HepG2 (cell line): ENCODE measurements at regions of chr18 and their contacts with region 1.

Region 1: DNA sequence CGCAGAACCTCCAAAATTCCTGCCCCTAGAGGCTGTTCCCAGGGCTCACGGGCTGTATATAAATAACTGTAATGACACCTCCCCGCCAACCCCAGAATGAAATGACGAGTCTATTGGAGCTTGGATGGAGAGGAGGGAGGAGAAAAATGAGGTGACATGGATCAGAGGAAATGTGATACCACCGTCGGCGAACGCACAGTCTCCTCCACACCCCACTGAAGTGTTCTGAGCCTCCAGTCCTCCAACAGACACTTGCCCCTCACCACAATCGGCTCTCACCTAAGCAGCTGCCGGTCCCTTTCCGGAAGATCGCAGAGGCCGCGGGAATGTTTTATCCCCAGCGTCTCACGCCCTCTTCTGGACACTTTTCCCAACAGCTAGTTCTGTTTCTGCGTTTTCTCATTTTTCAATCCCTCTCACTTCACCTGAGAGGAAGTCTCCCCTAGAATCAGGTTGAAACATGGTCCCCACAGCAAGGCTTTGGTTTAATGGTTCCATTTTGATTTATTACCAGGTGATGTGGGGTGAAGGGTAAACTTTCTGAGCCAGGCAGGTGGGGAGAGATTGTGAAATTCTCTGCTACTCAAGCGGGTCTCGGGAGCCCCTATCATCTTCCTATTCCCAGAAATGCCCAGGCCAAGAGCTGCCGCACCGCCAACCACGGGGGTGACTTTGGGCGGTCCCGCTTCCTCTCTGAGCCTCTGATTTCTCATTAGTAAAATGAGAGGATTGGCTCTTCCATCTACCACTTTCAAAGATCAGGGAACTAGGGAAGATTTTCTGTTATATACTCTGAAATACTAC is 9.1 kb upstream of the MYO5B start:
- DNase-seq: peak; percentile 46
- ATAC-seq: peak; percentile 86
- H3K4me3 ChIP-seq: peak overlapping the region in 1 of 3 experiments; percentile 56; a peak in 2 of 6 replicates
- H3K27ac ChIP-seq: no peak overlapping the region
- H3K4me1 ChIP-seq: peaks cover 32% of the 10 kb centered on the region
- H3K27me3 ChIP-seq: peaks cover 0 to 17% of the 10 kb centered on the region in 2 experiments; a peak in 3 of 5 replicates
- CTCF ChIP-seq: peak; percentile 90
- EP300 ChIP-seq: no peak
- POLR2A ChIP-seq: no peak
- RAD21 ChIP-seq: peak; percentile 79

Region 2: GRCh38 chr18:49899657-49900330 is 304.2 kb before region 1 on chr18:
- CTCF ChIA-PET with region 1: no interaction called
- POLR2A ChIA-PET with region 1: no interaction called
- in situ Hi-C with region 1: no loop called
- intact Hi-C with region 1: loop called (anchors 2 kb)
- DNase-seq: peak; percentile 27
- ATAC-seq: peak; percentile 92
- H3K4me3 ChIP-seq: no peak overlapping the region
- H3K27ac ChIP-seq: no peak overlapping the region
- H3K4me1 ChIP-seq: no peaks in the 10 kb centered on the region
- H3K27me3 ChIP-seq: no peaks in the 10 kb centered on the region
- CTCF ChIP-seq: peak; percentile 47
- EP300 ChIP-seq: no peak
- POLR2A ChIP-seq: no peak
- RAD21 ChIP-seq: peak; percentile 30; the same call in 1 of the 2 replicates

Region 3: DNA sequence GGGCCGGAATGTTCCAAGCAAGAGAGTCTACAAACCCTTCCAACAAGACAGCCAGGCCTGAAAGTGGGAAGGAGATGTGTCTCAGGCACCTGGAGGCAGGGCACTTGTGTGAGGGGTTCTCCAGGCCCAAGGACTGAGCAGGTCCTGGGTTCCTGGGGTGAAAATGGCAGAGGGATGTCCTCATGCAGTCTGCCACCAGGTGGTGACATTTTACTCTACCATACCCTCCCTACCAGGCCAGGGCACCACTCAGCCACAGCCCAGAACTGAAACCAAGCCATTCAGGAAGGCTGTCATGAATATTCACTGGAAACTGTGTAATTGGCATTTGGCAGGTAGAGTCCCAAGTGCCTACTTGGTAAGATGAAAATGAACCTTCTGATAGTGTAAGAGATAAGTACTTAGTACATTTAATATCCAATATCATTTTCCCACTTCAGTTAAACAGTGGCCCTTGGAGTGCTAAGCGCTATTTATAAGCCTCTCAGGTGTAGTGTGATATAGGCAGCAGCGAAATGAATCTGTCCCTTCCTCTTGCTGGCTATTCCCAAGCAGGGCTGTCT is 194.1 kb before region 1 on chr18:
- CTCF ChIA-PET with region 1: interaction called, 15 read pairs
- POLR2A ChIA-PET with region 1: no interaction called
- in situ Hi-C with region 1: no loop called
- intact Hi-C with region 1: loop called (anchors 2 kb)
- DNase-seq: peak; percentile 49
- ATAC-seq: peak; percentile 98
- H3K4me3 ChIP-seq: no peak overlapping the region
- H3K27ac ChIP-seq: no peak overlapping the region
- H3K4me1 ChIP-seq: peaks cover 13% of the 10 kb centered on the region; the same call in 1 of the 2 replicates
- H3K27me3 ChIP-seq: no peaks in the 10 kb centered on the region
- CTCF ChIP-seq: peak; percentile 80
- EP300 ChIP-seq: no peak
- POLR2A ChIP-seq: no peak
- RAD21 ChIP-seq: peak; percentile 48; the same call in 1 of the 2 replicates

Region 4: DNA sequence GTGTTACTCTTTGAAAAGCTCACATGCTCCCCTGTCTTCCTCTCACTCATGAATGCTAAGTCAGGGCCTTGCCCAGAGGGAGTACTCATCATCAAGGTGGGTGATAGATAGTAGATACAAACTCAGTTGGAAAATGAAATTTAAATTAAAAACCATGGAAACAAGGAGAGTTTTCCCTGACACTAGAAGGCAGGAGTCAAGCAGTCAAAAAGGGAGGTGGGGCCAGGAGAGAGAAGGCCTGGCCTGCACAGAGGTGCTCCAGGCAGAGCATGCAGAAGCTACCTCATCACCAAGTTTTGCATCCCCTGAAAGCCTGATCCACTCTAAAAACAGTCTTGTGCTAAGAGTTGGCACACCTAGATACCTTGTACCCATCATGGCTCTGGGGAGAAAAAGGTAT is 152.7 kb before region 1 on chr18:
- CTCF ChIA-PET with region 1: interaction called, 10 read pairs
- POLR2A ChIA-PET with region 1: no interaction called
- in situ Hi-C with region 1: loop called (anchors 5 kb)
- intact Hi-C with region 1: loop called (anchors 2 kb)
- DNase-seq: peak; percentile 25
- ATAC-seq: peak; percentile 88
- H3K4me3 ChIP-seq: no peak overlapping the region
- H3K27ac ChIP-seq: no peak overlapping the region
- H3K4me1 ChIP-seq: no peaks in the 10 kb centered on the region
- H3K27me3 ChIP-seq: no peaks in the 10 kb centered on the region
- CTCF ChIP-seq: peak; percentile 73
- EP300 ChIP-seq: no peak
- POLR2A ChIP-seq: no peak
- RAD21 ChIP-seq: peak; percentile 62

Region 5: DNA sequence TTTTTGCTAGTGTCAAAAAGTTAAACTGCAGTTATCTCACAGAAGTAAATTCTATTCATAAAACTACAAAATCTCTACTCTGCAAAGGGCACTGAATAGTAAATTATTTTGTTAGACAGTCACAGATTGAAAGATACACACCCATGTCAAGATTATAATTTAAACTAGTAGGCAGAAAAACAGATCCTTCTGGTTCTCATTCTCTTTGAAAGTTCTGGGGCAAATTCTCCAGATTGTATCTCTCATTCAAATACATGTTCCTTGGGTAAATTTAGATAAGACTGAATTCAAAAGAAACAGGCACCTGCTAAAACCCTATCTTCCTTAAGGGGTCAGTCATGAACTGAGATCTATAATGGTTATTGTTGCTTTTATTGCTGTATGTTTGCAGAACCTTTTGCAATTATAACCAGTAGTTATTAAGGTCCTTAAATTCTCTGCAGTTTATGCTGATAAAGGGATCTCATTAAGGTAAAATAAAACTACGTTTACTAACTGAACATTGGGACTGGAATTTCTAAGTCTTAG is 92.7 kb before region 1 on chr18:
- CTCF ChIA-PET with region 1: no interaction called
- POLR2A ChIA-PET with region 1: no interaction called
- in situ Hi-C with region 1: no loop called
- intact Hi-C with region 1: no loop called
- DNase-seq: no peak
- ATAC-seq: no peak
- H3K4me3 ChIP-seq: no peak overlapping the region
- H3K27ac ChIP-seq: no peak overlapping the region
- H3K4me1 ChIP-seq: peaks cover 24% of the 10 kb centered on the region
- H3K27me3 ChIP-seq: no peaks in the 10 kb centered on the region
- CTCF ChIP-seq: no peak
- EP300 ChIP-seq: no peak
- POLR2A ChIP-seq: no peak
- RAD21 ChIP-seq: no peak